Activated CD4-positive, alpha-beta T cell treated with anti-CD3 and anti-CD28 coated beads for 36 hours (primary cell): ENCODE measurements at regions of chr2 and their contacts with region 1.

Region 1: GRCh38 chr2:208040199-208041171 is 15.2 kb upstream of the PLEKHM3 start:
- DNase-seq: peak; percentile 90
- ATAC-seq: peak; percentile 95
- H3K4me3 Mint-ChIP-seq: no peak overlapping the region
- H3K27ac Mint-ChIP-seq: no peak overlapping the region
- H3K4me1 Mint-ChIP-seq: peaks cover 5% of the 10 kb centered on the region
- H3K27me3 Mint-ChIP-seq: peaks cover 2% of the 10 kb centered on the region

Region 2: DNA sequence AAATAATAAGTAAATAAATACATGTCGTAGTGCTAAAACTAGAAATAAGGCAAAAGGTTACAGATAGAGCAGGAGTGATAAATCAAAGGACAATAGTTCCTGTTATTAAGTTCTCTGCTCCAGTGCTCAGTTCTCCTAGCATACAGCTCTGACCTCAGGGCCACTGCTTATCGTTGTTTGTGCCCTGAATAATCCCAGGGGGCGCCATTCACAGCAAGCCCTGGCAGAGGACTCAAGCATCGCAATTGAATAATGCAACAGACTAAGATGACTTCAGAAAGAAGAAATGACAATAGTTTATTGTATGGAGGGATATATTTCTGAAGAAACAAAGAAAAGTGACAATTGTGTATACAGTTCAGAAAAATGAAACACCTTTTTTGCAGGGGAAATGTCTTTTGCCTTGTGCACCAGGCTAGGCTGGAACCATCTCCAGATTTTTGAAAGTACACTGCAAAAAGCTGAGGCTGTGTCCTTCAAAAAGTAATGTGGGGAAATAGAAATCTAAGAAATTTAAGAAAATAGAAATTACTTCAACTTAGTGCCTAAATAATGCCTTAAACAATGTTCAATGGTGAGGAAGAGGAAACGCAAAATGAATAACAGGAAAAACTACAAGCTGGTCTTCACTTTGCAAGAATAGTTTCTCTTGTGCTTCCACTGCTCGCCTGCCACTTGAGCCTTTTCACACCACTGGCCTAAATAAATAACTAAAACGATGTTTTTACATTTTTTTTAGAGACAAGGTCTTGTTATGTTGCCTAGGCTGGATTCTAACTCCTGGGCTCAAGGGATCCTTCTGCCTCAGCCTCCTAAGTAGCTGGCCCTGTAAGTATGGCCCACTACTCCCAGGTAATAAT is 348.0 kb before region 1 on chr2:
- CTCF ChIA-PET with region 1: interaction called, 12 read pairs
- POLR2A ChIA-PET with region 1: no interaction called
- intact Hi-C with region 1: no loop called
- DNase-seq: peak; percentile 66
- ATAC-seq: peak; percentile 75
- H3K4me3 Mint-ChIP-seq: no peak overlapping the region
- H3K27ac Mint-ChIP-seq: no peak overlapping the region
- H3K4me1 Mint-ChIP-seq: peaks cover 9% of the 10 kb centered on the region
- H3K27me3 Mint-ChIP-seq: no peaks in the 10 kb centered on the region

Region 3: DNA sequence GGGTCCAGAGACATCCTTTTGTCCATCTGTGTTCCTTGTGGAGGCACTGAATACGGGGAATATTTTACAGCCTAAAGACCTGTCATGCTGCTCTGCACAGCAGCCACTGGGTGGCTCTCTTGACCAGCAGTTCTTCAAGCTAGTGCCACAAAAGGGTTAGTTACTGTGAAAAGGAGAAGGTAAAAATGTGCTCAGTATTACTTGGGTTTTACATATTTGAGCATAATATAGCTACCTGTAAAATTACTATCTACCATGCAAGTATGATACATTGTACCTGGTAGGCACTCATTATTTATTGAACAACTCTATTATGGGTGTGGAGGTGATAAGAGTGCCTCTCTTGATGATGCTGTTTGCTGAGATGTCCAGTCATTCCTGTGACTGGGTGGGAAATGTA is 294.4 kb before region 1 on chr2:
- CTCF ChIA-PET with region 1: interaction called, 57 read pairs
- POLR2A ChIA-PET with region 1: interaction called, 3 read pairs
- intact Hi-C with region 1: loop called (anchors 1 kb)
- DNase-seq: peak; percentile 68
- ATAC-seq: peak; percentile 85
- H3K4me3 Mint-ChIP-seq: no peak overlapping the region
- H3K27ac Mint-ChIP-seq: no peak overlapping the region
- H3K4me1 Mint-ChIP-seq: no peaks in the 10 kb centered on the region
- H3K27me3 Mint-ChIP-seq: no peaks in the 10 kb centered on the region

Region 4: DNA sequence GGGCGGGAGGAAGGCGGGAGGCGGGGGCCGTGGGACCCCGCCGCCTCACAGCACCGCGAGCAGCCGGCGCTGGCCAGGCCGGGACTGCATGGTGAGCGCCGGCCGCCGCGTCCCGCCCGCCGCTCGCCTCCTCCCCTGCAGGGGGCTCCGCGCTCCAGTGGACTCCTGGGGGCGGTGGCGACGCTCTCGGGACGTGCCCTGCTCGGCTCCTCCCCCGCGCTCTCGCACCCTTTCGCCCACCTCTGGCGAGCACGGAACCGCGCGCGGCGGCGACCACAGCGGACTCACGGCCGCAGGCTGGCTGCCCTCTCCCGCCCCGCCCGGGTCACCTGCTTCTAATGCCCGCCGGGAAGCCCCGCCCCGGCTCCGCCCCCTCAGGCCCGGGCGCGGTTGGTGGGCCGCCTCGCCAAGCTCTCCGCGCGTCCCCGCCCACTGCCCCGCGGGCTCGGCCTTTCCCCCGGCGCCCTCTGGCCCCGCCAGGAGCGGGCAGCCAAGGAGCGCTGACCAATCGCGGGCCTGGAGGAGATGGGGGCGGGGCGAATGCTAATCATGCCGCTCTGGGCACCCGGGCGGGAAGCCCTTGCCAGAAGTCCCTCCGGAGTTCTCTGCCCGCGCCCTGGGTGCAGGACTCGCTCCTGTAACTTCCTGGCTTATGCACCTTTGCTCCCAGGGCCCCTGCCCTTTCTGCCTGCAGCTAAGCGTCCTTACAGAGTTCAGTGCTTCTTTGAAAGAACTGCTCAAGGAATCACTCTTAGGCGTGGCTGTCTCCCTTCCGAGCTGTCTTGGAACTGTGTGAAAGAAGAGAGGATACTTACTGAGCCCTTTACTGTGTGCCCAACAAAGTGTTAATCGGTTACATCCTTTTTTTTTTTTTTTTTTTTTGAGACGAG is 270.6 kb before region 1 on chr2 and contains the start of gene FZD5:
- CTCF ChIA-PET with region 1: interaction called, 15 read pairs
- POLR2A ChIA-PET with region 1: no interaction called
- intact Hi-C with region 1: loop called (anchors 2 to 5 kb)
- DNase-seq: peak; percentile 90
- ATAC-seq: peak; percentile 83
- H3K4me3 Mint-ChIP-seq: peak within 1 kb of the TSS; percentile 79
- H3K27ac Mint-ChIP-seq: no peak within 1 kb of the TSS
- H3K4me1 Mint-ChIP-seq: peaks cover 27% of the 10 kb centered on the region
- H3K27me3 Mint-ChIP-seq: peaks cover 41% of the 10 kb centered on the region
- total RNA-seq, gene FZD5: 1.1 to 1.3 TPM

Region 5: DNA sequence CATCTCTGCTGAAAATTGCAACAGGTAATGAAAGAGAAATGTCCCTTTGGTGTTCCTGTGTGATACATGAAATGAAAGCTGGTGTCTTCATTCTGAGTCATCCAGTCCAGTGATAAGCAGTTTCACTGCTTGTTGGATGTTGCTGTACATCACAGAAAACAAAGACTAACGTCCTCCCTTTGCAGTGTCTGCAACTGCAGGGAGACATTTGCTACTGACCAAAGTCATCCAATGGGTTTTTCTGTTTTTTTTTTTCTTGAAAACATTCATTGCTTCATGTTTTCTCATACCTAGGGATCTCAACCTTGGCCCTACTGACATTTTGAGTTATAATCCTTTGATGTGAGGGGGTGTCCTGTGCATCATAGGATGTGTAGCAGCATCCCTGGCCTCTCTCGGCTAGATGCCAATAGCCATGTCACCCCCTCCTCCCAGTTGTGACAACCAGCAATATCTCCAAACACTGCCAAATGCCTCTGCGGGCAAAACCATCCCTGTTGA is 207.2 kb before region 1 on chr2:
- CTCF ChIA-PET with region 1: no interaction called
- POLR2A ChIA-PET with region 1: no interaction called
- intact Hi-C with region 1: loop called in 1 of 2 experiments (anchors 5 kb)
- DNase-seq: no peak
- ATAC-seq: peak; percentile 86
- H3K4me3 Mint-ChIP-seq: no peak overlapping the region
- H3K27ac Mint-ChIP-seq: no peak overlapping the region
- H3K4me1 Mint-ChIP-seq: peaks cover 8% of the 10 kb centered on the region
- H3K27me3 Mint-ChIP-seq: no peaks in the 10 kb centered on the region

Region 6: DNA sequence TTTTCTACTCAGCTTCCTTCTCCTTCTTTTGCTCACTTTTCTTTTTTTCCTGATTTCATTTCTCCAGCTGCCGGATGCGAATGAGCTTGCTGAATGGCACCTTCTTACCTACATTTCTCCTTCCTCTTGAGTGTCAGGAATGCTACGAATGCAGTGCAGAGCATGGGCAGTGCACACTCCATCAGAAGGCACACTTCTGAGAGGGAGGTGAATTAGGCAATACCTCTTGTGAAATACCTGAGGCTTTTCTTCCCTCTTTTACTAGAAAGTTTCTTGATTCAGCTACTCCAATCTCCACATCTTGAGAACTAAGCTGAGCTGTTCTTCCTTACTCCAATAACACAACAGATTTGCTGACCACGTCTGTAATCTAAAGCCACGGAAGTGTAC is 66.3 kb before region 1 on chr2:
- CTCF ChIA-PET with region 1: interaction called, 11 read pairs
- POLR2A ChIA-PET with region 1: no interaction called
- intact Hi-C with region 1: no loop called
- DNase-seq: no peak
- ATAC-seq: no peak
- H3K4me3 Mint-ChIP-seq: no peak overlapping the region
- H3K27ac Mint-ChIP-seq: no peak overlapping the region
- H3K4me1 Mint-ChIP-seq: peaks cover 22% of the 10 kb centered on the region
- H3K27me3 Mint-ChIP-seq: no peaks in the 10 kb centered on the region

Region 7: GRCh38 chr2:208025037-208025813 is 15.3 kb before region 1 on chr2 and contains the start of gene PLEKHM3:
- CTCF ChIA-PET with region 1: interaction called, 11 read pairs
- POLR2A ChIA-PET with region 1: no interaction called
- intact Hi-C with region 1: no loop called
- DNase-seq: peak; percentile 88
- ATAC-seq: peak; percentile 83
- H3K4me3 Mint-ChIP-seq: peak within 1 kb of the TSS; percentile 77
- H3K27ac Mint-ChIP-seq: peak within 1 kb of the TSS; percentile 94
- H3K4me1 Mint-ChIP-seq: peaks cover 12% of the 10 kb centered on the region
- H3K27me3 Mint-ChIP-seq: no peaks in the 10 kb centered on the region
- total RNA-seq, gene PLEKHM3: 4.5 to 5.2 TPM

Region 8: GRCh38 chr2:208086029-208086428 is 45.5 kb after region 1 on chr2:
- CTCF ChIA-PET with region 1: no interaction called
- POLR2A ChIA-PET with region 1: no interaction called
- intact Hi-C with region 1: no loop called
- DNase-seq: no peak
- ATAC-seq: no peak
- H3K4me3 Mint-ChIP-seq: no peak overlapping the region
- H3K27ac Mint-ChIP-seq: no peak overlapping the region
- H3K4me1 Mint-ChIP-seq: no peaks in the 10 kb centered on the region
- H3K27me3 Mint-ChIP-seq: peaks cover 2% of the 10 kb centered on the region

Region 9: DNA sequence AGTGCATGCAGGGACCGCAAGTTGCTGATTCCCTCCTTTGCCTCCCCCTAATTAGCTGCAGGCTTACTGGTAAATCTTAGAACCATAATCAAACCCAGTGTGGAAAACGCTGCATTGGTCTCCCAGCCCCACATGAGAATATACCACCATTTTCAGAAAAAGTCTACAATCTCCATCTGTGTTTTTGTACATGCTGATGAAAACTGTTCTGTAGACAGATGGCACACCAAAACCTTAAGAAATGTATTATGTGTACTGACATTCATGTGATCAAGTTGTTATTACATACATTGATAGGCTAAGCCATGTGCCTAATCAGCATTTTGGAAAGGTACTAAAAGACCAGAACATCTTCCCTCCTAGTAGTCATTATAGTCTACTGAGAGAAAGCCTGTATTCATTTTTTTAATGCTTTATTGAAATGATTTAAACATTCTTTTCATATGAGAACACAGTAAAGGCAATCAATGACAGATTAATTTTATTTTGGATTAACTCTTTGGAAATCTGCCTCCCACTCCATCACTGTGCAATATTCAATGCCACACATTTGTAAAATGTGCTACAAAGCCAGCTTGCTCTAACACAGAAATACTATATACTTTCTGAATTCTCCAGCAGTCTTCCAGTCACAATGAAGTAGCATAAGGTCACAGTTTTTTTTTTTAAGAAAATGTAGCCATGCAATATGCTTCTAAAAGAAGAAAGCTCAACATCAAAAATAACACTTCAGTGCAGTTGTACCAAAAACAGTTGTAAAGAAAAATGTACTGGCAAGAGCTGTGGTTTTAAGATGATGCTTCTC is 124.7 kb after region 1 on chr2:
- CTCF ChIA-PET with region 1: no interaction called
- POLR2A ChIA-PET with region 1: no interaction called
- intact Hi-C with region 1: no loop called
- DNase-seq: no peak
- ATAC-seq: no peak
- H3K4me3 Mint-ChIP-seq: no peak overlapping the region
- H3K27ac Mint-ChIP-seq: no peak overlapping the region
- H3K4me1 Mint-ChIP-seq: no peaks in the 10 kb centered on the region
- H3K27me3 Mint-ChIP-seq: no peaks in the 10 kb centered on the region